PC-3 (cell line): ENCODE measurements at regions of chr17 and their contacts with region 1.

Region 1: DNA sequence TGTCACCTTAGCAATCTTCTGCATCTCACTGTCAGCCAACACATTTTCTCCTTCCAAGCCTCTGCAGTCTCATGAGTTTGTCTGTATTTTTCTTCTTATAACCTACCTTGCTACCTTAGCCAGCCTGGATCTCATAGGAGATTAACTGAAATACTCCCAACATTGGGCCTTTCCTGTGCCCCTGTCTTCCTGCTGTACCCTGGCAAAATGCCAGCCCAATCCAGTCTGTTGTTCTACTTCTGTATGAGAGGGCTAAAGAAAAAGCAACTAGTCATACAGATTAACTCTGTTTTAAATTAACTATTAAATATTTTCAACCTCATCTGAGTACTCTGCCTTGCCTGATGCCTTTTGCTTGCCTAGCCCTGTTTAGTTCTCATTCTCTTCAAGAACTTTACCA is 18.4 kb downstream of the GOSR1 start:
- DNase-seq: no peak
- ATAC-seq: no peak
- H3K4me3 ChIP-seq: no peak overlapping the region
- H3K27ac ChIP-seq: no peak overlapping the region
- H3K4me1 ChIP-seq: no peaks in the 10 kb centered on the region
- H3K27me3 ChIP-seq: no peaks in the 10 kb centered on the region
- CTCF ChIP-seq: no peak

Region 2: DNA sequence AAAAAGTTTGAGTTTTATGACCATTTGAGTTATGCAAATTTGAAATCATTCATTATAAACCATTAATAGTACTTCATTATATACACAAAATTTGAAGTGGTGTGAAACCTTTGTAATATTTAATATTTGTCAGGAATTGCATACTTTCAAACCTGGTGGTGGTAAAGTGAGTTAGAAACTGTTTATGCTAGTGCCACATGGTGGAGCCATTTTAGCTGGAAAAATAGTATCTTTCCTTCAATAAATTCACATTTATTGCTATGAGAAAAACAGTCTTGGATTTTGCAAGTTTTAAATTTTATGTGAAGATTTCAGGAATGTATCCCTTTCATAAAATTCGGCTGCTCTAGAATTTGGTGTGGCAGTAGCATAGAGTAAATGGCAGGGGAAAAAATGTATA is 196.6 kb before region 1 on chr17:
- CTCF ChIA-PET with region 1: no interaction called
- POLR2A ChIA-PET with region 1: interaction called, 10 read pairs
- intact Hi-C with region 1: no loop called
- DNase-seq: peak; percentile 39
- ATAC-seq: no peak
- H3K4me3 ChIP-seq: no peak overlapping the region
- H3K27ac ChIP-seq: no peak overlapping the region
- H3K4me1 ChIP-seq: no peaks in the 10 kb centered on the region
- H3K27me3 ChIP-seq: no peaks in the 10 kb centered on the region
- CTCF ChIP-seq: peak; percentile 62